Head of caudate nucleus (tissue), 42 donors: ENCODE measurements at regions of chr9 and their contacts with region 1.

Region 1: DNA sequence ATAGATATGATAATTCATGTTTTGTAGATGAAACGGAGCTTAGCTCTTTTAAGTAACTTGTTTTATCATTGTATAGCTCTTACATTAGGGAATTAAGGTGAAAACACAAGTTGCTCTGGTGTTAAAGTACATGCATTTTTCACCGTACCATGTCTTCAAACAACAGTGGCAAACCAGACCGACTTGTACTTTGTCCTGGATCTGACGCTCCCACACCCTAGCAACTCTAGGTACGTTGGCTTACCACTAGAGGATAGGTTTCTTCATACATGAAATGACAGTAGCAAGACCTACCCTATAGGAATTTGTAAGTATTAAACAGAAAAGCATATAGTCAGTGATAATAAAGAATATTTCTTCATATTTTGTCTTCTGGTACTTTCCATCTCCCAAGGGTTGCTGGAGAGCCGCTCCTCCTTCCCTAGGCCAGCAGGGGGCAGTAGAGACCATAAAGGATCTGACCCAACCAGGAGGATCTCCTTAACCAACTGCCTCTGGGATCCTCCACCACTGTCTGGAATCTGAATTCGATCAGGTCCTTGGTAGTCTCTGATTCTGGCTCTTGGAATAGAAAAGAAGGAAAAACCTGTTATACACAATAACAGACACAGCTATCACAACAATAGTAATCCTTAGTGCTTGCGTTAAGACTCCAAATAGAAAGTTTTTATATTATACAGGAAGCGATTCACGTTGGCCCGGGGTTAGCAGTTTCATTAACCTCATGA is 136.7 kb downstream of the CAVIN4 start:
- DNase-seq: peak; percentile 73 to 97 (median 90)

Region 2: GRCh38 chr9:101028346-101029314 is 314.1 kb after region 1 on chr9 and contains the start of gene PLPPR1:
- intact Hi-C with region 1: loop called (anchors 10 kb)
- DNase-seq: peak; percentile 74 to 96 (median 89)

Region 3: GRCh38 chr9:101093620-101094019 is 379.1 kb after region 1 on chr9:
- intact Hi-C with region 1: loop called (anchors 10 kb)
- DNase-seq: no peak

Region 4: DNA sequence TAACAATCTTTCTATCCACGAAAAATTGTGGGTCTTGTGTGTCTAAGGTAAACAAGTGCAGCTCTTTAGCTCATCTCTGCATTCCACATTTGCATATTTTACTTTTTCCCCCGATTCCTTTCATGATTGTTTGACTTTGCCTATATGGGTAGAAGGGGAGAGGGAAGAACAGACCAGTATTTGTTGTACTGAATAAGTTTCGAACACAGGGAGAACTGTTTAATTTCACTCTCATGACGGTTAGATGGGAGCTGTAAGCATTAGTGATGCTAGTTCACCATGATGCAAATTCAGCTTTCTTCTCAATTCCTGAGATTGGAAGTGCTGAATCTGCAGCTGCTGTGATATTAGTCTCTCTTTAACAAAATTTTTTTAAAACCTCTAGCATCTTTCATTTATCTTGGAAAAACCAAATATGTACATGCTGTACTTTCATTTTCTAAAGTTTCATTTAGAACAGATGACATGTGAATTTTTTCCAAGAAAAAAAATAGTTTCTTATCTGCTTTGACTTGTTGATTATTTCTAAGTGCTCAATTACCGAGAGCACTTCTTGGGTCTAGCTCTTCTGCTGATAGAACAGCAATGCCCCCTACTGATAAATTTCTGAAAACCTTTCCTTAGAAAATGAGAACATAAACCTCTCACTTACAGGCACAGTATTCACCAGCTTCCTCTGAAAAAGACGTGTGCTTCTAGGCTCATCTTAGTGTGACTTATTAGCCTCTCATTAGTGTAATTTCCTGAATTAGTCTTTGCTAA is 520.8 kb after region 1 on chr9:
- intact Hi-C with region 1: loop called (anchors 5 kb)
- DNase-seq: peak in 5 of 42 donors; percentile 9 to 71 (median 37)

Region 5: DNA sequence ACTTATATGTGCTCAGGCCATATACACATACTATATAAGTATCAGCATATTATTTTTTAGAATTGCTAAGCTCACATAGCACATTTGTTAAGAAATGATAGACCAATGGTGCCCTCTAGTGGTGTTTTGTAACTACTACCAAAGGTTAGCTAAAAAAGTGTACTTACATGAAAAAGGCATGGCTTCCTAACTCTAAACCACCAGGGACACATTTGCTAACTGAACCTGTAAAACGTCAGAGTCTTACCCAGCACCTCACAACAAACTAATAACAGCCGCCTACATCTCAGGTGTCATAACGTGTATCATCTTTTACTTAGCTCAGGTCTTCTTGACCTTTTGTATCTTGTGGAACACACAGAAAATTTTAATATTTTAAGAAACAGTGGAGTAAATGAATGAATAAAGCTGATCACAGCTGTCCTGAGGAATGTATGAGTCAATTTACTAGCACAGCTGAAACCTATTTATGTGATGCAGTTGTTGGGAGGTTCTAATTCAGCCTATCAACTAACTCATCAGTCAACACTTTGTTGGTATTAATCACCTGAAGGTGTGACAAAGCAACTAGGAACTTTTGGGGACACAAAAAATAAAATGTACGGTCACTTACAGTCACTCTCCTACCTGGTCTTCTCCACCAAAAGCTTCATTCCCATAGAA is 597.4 kb after region 1 on chr9:
- intact Hi-C with region 1: loop called (anchors 2 kb)
- DNase-seq: peak in 9 of 42 donors; percentile 40 to 77 (median 61)

Region 6: GRCh38 chr9:101398068-101398929 is 683.8 kb after region 1 on chr9 and contains the starts of genes MRPL50 and ZNF189:
- intact Hi-C with region 1: loop called (anchors 5 kb)
- DNase-seq: peak; percentile 98 to 100 (median 100)